ENCODE measurements at regions of chr5 and their contacts with region 1.

Region 1: DNA sequence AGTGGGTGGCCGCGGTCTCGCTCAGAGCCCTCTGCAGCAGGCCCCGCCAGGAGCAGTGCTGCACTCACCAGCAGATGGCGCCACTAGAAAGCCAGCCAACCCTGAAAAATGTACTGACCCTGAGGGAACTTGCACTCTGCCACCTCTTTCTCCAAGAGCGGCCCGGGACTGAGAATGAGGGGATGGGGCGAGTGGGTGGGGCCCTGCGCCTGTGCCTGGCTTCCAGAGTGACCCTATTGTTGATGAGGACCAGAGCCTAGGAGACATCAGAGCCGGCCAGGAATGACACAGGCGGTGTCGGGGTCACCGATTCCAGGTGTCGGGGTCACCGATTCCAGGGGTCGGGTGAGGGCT is 2.9 kb upstream of the IL17B start:
- DNase-seq: peak; percentile 56 to 96
- H3K4me3 ChIP-seq: no peak overlapping the region
- H3K27ac ChIP-seq: no peak overlapping the region
- H3K4me1 ChIP-seq: no peaks in the 10 kb centered on the region; a peak in 3 of 7 replicates
- H3K27me3 ChIP-seq: no peaks in the 10 kb centered on the region
- CTCF ChIP-seq: peak; percentile 96 to 97 (median 97)
- EP300 ChIP-seq: no peak
- POLR2A ChIP-seq: no peak
- RAD21 ChIP-seq: peak; percentile 87 to 93

Region 2: GRCh38 chr5:149400304-149400703 is 18.3 kb after region 1 on chr5:
- CTCF ChIA-PET with region 1: interaction called, 44 read pairs
- POLR2A ChIA-PET with region 1: interaction called, 3 read pairs
- DNase-seq: no peak
- H3K4me3 ChIP-seq: no peak overlapping the region
- H3K27ac ChIP-seq: no peak overlapping the region
- H3K4me1 ChIP-seq: no peaks in the 10 kb centered on the region; a peak in 1 of 7 replicates
- H3K27me3 ChIP-seq: no peaks in the 10 kb centered on the region; a peak in 1 of 7 replicates
- CTCF ChIP-seq: no peak
- EP300 ChIP-seq: no peak
- POLR2A ChIP-seq: no peak
- RAD21 ChIP-seq: no peak

Region 3: DNA sequence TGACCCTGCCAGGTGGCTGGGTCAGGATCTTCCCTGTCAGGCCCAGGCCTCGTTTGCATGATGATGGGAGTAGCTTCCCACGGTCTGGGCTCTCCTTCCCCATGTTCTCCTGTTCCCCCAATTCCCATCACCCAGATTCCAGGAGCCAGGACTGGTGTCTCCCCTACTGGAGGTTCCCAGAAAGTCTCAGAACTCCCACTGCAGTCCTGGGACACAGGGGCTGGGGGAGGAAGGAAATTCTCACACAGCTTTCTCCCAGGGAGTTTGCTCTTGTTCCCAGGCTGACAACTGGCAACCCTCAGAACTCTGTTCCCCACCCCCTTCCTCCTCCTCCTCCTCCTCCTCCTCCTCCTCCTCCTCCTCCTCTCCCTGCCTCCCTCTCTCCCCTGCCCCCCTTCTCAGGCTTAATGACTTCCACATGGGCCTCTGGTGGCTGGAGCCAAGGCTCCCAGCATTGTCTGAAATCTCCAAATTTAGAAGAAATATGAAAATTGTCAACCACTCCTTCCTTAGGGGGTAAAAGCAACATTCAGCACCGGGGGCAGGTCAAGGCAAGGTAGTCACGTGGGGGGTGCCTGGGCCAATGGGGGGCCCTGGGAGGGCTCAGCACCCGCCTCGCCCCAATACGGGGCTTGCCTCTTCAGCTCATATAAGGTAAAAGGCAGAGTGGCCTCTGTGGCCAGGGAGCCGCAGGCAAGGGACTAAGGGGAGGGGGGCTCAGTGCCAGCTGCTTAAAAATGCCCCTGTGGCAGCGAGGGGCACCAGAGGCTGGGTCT is 24.4 kb after region 1 on chr5:
- CTCF ChIA-PET with region 1: interaction called, 44 read pairs
- POLR2A ChIA-PET with region 1: no interaction called
- DNase-seq: no peak
- H3K4me3 ChIP-seq: no peak overlapping the region
- H3K27ac ChIP-seq: no peak overlapping the region
- H3K4me1 ChIP-seq: peaks cover 0 to 10% (median 5%) of the 10 kb centered on the region in 4 experiments; a peak in 4 of 7 replicates
- H3K27me3 ChIP-seq: no peaks in the 10 kb centered on the region; a peak in 1 of 7 replicates
- CTCF ChIP-seq: peak in 1 of 3 experiments; percentile 9; a peak in 1 of 4 replicates
- EP300 ChIP-seq: no peak
- POLR2A ChIP-seq: no peak
- RAD21 ChIP-seq: no peak

Region 4: DNA sequence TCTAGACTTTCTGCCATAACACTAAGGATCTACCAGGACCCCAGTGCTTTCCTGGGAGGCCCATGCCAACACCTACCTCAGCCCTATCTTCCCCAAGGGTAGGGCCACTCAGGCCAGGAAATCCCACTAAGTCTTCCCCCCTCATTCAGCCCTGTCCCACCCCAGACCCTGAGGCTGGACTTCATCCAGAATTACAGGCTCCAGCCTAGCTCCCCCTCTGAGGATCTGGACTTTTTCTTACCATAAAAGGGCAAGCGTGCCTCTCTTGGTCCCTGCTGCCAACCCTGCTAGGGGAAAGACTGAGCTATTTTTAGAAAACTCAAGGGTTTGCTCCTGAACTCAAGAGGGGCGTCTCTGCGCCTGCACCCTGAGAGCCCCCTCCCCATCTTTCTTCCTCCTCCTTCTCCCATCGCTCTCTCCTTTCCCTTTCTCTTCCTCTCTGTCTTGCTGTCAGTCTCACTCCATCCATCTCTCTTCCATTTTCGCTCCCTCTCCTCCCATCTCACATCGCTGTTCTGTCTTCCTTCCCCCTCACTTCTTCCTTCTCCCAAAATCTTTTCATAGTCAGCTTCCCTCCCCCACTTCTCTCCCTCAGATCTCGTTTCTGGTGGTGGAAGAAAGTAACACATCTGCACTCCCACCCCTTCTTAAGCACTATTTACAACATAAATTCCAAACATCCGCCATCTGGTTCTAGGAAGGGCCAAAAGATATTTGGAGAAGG is 35.2 kb after region 1 on chr5:
- CTCF ChIA-PET with region 1: interaction called, 35 read pairs
- POLR2A ChIA-PET with region 1: interaction called, 5 read pairs
- DNase-seq: no peak
- H3K4me3 ChIP-seq: no peak overlapping the region
- H3K27ac ChIP-seq: no peak overlapping the region
- H3K4me1 ChIP-seq: peaks cover 0 to 9% (median 4%) of the 10 kb centered on the region in 4 experiments
- H3K27me3 ChIP-seq: no peaks in the 10 kb centered on the region
- CTCF ChIP-seq: no peak
- EP300 ChIP-seq: no peak
- POLR2A ChIP-seq: no peak
- RAD21 ChIP-seq: no peak

Region 5: GRCh38 chr5:149422366-149423048 is 40.5 kb after region 1 on chr5:
- CTCF ChIA-PET with region 1: interaction called, 1,310 read pairs
- POLR2A ChIA-PET with region 1: interaction called, 4 read pairs
- DNase-seq: no peak
- H3K4me3 ChIP-seq: no peak overlapping the region
- H3K27ac ChIP-seq: no peak overlapping the region
- H3K4me1 ChIP-seq: peaks cover 13 to 33% (median 20%) of the 10 kb centered on the region in 4 experiments
- H3K27me3 ChIP-seq: no peaks in the 10 kb centered on the region
- CTCF ChIP-seq: no peak
- EP300 ChIP-seq: peak in 1 of 2 experiments; percentile 22; a peak in 1 of 3 replicates
- POLR2A ChIP-seq: no peak
- RAD21 ChIP-seq: no peak

Region 6: GRCh38 chr5:149561848-149562247 is 179.9 kb after region 1 on chr5:
- CTCF ChIA-PET with region 1: interaction called, 22 read pairs
- POLR2A ChIA-PET with region 1: no interaction called
- DNase-seq: no peak
- H3K4me3 ChIP-seq: no peak overlapping the region
- H3K27ac ChIP-seq: peak overlapping the region; percentile 51; the same call in 1 of the 2 replicates
- H3K4me1 ChIP-seq: peaks cover 5 to 12% (median 7%) of the 10 kb centered on the region in 4 experiments; a peak in 6 of 7 replicates
- H3K27me3 ChIP-seq: no peaks in the 10 kb centered on the region
- CTCF ChIP-seq: no peak
- EP300 ChIP-seq: no peak
- POLR2A ChIP-seq: no peak
- RAD21 ChIP-seq: no peak

Region 7: GRCh38 chr5:149567226-149567625 is 185.3 kb after region 1 on chr5:
- CTCF ChIA-PET with region 1: interaction called, 22 read pairs
- POLR2A ChIA-PET with region 1: no interaction called
- DNase-seq: no peak
- H3K4me3 ChIP-seq: no peak overlapping the region
- H3K27ac ChIP-seq: no peak overlapping the region
- H3K4me1 ChIP-seq: peaks cover 0 to 7% (median 4%) of the 10 kb centered on the region in 4 experiments; a peak in 3 of 7 replicates
- H3K27me3 ChIP-seq: no peaks in the 10 kb centered on the region
- CTCF ChIP-seq: no peak
- EP300 ChIP-seq: no peak
- POLR2A ChIP-seq: no peak
- RAD21 ChIP-seq: no peak

Measured in H1 (cell line).